ENCODE measurements at regions of chr10 and their contacts with region 1.

Region 1: DNA sequence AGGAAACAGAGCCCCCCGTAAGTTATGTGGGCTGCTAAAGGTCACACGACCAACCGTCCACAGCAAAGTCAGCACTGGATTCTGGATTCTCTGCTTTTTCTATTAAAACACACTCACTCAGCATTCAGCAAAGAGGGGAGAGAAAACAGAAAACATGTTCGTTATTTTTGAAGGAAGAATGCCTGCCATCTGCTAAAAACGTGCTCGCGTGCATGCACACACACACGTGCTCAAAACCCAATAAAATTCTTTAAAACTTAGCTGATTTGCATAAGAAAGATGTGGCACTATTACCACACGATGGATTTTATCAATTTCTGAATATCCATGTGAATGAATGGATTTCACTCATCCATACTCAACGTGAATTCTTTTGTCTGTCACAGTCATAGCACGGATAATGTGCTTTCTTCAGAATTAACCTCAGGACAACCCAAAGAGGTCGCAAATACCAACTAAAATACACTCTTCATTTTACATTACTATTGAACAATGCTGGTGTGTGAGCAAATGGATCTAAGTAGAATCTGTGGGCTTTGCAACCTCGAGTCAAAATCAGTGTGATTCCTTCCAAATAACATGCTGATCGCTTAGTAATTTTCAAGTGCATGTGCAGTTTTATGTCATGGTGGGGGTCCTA is 40.8 kb downstream of the NRP1 start:
- DNase-seq: no peak
- H3K4me3 ChIP-seq: no peak overlapping the region
- H3K27ac ChIP-seq: no peak overlapping the region
- H3K27me3 ChIP-seq: no peaks in the 10 kb centered on the region
- CTCF ChIP-seq: no peak

Region 2: DNA sequence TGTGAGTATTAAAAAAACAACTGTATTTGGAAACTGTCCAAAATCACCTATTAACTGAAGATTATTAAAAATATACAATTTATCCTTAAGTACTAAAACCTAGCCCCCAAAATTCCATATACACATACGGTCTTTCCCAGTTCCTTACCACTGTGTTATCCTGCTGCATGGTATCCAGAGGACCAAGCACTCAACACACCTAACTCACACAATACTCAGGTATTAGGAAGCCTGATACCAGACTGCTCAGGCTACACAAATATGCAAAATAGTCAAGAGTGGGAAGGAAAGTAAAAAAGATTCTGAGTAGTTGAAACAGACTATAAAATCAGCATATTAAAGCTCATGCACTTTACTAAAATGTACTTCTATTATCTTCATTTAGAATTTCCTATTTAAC is 1013.9 kb before region 1 on chr10:
- CTCF ChIA-PET with region 1: no interaction called
- POLR2A ChIA-PET with region 1: no interaction called
- DNase-seq: no peak
- H3K4me3 ChIP-seq: no peak overlapping the region
- H3K27ac ChIP-seq: no peak overlapping the region
- H3K27me3 ChIP-seq: no peaks in the 10 kb centered on the region
- CTCF ChIP-seq: no peak

Region 3: GRCh38 chr10:33041779-33042437 is 251.7 kb before region 1 on chr10:
- CTCF ChIA-PET with region 1: no interaction called
- POLR2A ChIA-PET with region 1: no interaction called
- DNase-seq: no peak
- H3K4me3 ChIP-seq: no peak overlapping the region
- H3K27ac ChIP-seq: no peak overlapping the region
- H3K27me3 ChIP-seq: no peaks in the 10 kb centered on the region
- CTCF ChIP-seq: no peak

Region 4: DNA sequence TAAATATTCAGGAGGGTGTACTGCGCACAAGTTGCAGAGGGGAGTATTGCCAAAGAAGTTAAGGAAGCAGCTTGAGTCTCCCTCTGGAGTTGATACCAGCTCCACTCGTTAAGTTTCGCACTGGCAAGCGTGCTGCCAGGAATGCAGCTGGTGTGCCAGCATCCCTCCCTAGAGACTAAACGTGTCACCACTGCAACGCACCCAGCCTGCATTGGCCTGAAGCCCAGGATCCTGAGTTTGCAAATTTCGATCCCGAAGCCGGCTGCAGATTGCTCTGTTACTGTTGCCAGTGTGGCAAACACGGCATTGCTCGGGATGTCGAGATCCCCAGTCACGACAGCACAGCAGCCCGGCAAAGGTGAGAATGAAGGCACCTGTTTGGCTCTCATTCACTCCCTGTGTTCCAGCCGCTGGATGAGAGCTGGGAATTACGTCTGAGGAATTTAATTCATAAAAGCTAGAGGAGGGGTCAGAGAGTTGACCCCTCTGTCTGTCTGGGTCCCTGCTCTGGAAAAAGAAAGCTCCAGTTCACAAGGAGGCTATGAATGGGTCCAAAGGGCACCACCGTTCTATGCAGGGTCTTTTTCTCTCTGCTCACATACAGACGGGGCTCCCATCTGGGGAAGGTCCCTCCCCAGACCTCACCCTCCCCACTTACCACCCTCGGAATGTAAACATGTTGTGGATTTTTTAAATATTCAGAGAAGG is 20.2 kb before region 1 on chr10:
- CTCF ChIA-PET with region 1: interaction called, 3 read pairs
- POLR2A ChIA-PET with region 1: interaction called, 11 read pairs
- DNase-seq: peak; percentile 88
- H3K4me3 ChIP-seq: peak overlapping the region; percentile 49
- H3K27ac ChIP-seq: peak overlapping the region; percentile 96
- H3K27me3 ChIP-seq: no peaks in the 10 kb centered on the region
- CTCF ChIP-seq: peak; percentile 33

Region 5: GRCh38 chr10:33334805-33335550 is 41.3 kb after region 1 on chr10:
- CTCF ChIA-PET with region 1: no interaction called
- POLR2A ChIA-PET with region 1: no interaction called
- DNase-seq: peak; percentile 74
- H3K4me3 ChIP-seq: peak overlapping the region; percentile 93
- H3K27ac ChIP-seq: peak overlapping the region; percentile 89
- H3K27me3 ChIP-seq: no peaks in the 10 kb centered on the region
- CTCF ChIP-seq: peak; percentile 64

Region 6: GRCh38 chr10:33542752-33543505 is 249.3 kb after region 1 on chr10:
- CTCF ChIA-PET with region 1: no interaction called
- POLR2A ChIA-PET with region 1: no interaction called
- DNase-seq: no peak
- H3K4me3 ChIP-seq: no peak overlapping the region
- H3K27ac ChIP-seq: no peak overlapping the region
- H3K27me3 ChIP-seq: no peaks in the 10 kb centered on the region
- CTCF ChIP-seq: no peak

Measured in AG04450 (cell line).